Activated T-helper 1 cell treated with anti-CD3 and anti-CD28 coated beads, Interleukin-12 subunit alpha, Interleukin-12 subunit beta, Interleukin-2, Interleukin-4 antibody, amounts not matched to agents 30 ng/mL and 10 ng/mL and 1 ng/mL, durations not matched to agents 14 hours and 24 hours and 36 hours (primary cell): ENCODE measurements at regions of chr1 and their contacts with region 1.

Region 1: GRCh38 chr1:244835276-244836134 is at the start of gene COX20:
- DNase-seq: peak; percentile 85
- H3K4me3 Mint-ChIP-seq: peak within 1 kb of the TSS; percentile 96
- H3K27ac Mint-ChIP-seq: peak within 1 kb of the TSS; percentile 99
- H3K4me1 Mint-ChIP-seq: peaks cover 56% of the 10 kb centered on the region
- H3K27me3 Mint-ChIP-seq: no peaks in the 10 kb centered on the region
- total RNA-seq, gene COX20: 27.4 and 27.6 TPM in 2 replicates

Region 2: GRCh38 chr1:244695940-244696339 is 139.6 kb before region 1 on chr1:
- intact Hi-C with region 1: no loop called
- DNase-seq: no peak
- H3K4me3 Mint-ChIP-seq: no peak overlapping the region
- H3K27ac Mint-ChIP-seq: no peak overlapping the region
- H3K4me1 Mint-ChIP-seq: no peaks in the 10 kb centered on the region
- H3K27me3 Mint-ChIP-seq: no peaks in the 10 kb centered on the region

Region 3: GRCh38 chr1:244801246-244801645 is 34.3 kb before region 1 on chr1:
- intact Hi-C with region 1: loop called (anchors 1 kb)
- DNase-seq: peak; percentile 6
- H3K4me3 Mint-ChIP-seq: no peak overlapping the region
- H3K27ac Mint-ChIP-seq: no peak overlapping the region
- H3K4me1 Mint-ChIP-seq: peaks cover 8% of the 10 kb centered on the region
- H3K27me3 Mint-ChIP-seq: peaks cover 14% of the 10 kb centered on the region

Region 4: GRCh38 chr1:244904119-244904819 is 68.8 kb after region 1 on chr1:
- intact Hi-C with region 1: no loop called
- DNase-seq: no peak
- H3K4me3 Mint-ChIP-seq: no peak overlapping the region
- H3K27ac Mint-ChIP-seq: no peak overlapping the region
- H3K4me1 Mint-ChIP-seq: no peaks in the 10 kb centered on the region
- H3K27me3 Mint-ChIP-seq: no peaks in the 10 kb centered on the region